ENCODE measurements at regions of chr11 and their contacts with region 1.

Region 1: DNA sequence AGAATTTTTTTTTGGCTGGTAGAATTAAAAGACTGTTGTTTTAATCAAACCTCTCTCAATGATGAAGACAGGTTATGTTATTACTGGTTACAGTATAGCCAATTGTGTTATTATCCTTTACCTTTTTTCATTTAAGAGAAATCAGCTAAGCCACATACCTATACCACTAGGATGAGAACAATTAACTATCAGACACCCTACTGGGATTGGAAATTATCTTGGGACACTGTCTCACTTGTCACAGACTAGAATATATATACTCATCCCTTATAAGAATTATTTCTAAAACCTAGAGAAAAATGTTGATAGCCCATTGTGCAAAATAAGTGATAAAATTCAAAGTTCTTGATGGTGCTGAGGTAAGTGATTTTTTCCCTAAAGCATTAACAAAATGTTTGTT is at the start of gene OR5AS1:
- DNase-seq: no peak
- H3K4me3 ChIP-seq: no peak within 1 kb of the TSS
- H3K27ac ChIP-seq: no peak within 1 kb of the TSS
- H3K4me1 ChIP-seq: no peaks in the 10 kb centered on the region
- H3K27me3 ChIP-seq: no peaks in the 10 kb centered on the region
- CTCF ChIP-seq: no peak
- total RNA-seq, gene OR5AS1: not detected in 2 replicates

Region 2: GRCh38 chr11:55826919-55827318 is 200.4 kb before region 1 on chr11 and contains the start of gene OR5L2:
- CTCF ChIA-PET with region 1: no interaction called
- POLR2A ChIA-PET with region 1: no interaction called
- intact Hi-C with region 1: no loop called
- DNase-seq: no peak
- H3K4me3 ChIP-seq: no peak within 1 kb of the TSS
- H3K27ac ChIP-seq: no peak within 1 kb of the TSS
- H3K4me1 ChIP-seq: no peaks in the 10 kb centered on the region
- H3K27me3 ChIP-seq: no peaks in the 10 kb centered on the region
- CTCF ChIP-seq: no peak
- total RNA-seq, gene OR5L2: not detected in 2 replicates

Region 3: DNA sequence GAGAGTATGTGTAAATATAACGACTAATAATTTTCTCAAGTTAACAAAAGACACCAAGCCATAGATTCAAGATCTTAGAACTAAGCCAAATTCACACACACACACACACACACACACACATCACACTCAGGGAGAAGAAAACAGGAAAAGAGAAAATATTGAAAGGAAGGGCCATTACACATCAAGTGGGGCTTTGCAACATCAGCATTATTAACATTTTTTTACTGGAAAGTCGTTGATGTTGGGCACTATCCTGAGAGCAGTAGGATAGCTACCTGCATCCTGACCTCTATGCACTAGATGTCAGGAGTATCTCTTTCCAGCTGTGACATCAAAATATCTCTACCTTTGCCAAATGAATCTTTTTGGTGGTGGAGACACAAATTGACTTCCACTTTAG is 179.9 kb before region 1 on chr11:
- CTCF ChIA-PET with region 1: no interaction called
- POLR2A ChIA-PET with region 1: no interaction called
- intact Hi-C with region 1: no loop called
- DNase-seq: no peak
- H3K4me3 ChIP-seq: no peak overlapping the region
- H3K27ac ChIP-seq: no peak overlapping the region
- H3K4me1 ChIP-seq: no peaks in the 10 kb centered on the region
- H3K27me3 ChIP-seq: no peaks in the 10 kb centered on the region
- CTCF ChIP-seq: no peak

Region 4: DNA sequence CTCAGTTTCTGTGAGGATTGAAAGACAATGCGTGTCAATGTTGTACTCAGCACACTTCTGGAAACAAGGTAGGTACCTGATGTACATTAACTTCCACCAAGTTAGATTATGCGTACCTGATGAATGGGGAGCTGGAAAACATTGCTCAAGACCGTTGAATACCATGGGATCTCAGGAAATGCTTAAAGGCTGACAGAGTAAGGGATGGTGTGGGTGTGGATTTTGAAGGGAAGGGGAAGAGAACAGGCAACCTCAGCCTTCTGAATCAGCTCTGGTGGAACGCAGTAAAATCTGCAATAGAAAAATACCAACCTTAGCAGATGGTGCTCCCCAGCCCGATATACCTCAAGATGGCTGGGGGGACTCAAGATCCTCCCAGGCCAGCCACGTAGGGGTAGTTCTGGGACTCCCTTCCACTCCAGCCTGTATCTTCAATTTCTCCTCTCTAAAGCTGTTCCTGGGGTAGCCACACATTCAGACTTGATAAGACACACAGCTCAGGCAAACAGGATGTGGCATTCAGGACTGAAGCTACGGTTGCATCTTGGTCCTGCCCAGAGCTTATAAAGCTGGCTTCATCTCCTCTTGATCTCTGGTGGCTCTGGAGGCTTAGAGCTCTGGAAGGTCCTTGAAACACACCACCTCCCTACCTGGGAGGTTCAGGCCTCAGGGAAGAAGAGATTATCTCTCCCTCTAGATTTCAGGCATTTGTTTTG is 1846.0 kb after region 1 on chr11:
- CTCF ChIA-PET with region 1: no interaction called
- POLR2A ChIA-PET with region 1: interaction called, 13 read pairs
- intact Hi-C with region 1: no loop called
- DNase-seq: no peak
- H3K4me3 ChIP-seq: no peak overlapping the region
- H3K27ac ChIP-seq: no peak overlapping the region
- H3K4me1 ChIP-seq: no peaks in the 10 kb centered on the region
- H3K27me3 ChIP-seq: peaks cover 30% of the 10 kb centered on the region; the same call in 1 of the 2 replicates
- CTCF ChIP-seq: no peak